Right cardiac atrium (tissue), 5 donors: ENCODE measurements at regions of chr20 and their contacts with region 1.

Region 1: DNA sequence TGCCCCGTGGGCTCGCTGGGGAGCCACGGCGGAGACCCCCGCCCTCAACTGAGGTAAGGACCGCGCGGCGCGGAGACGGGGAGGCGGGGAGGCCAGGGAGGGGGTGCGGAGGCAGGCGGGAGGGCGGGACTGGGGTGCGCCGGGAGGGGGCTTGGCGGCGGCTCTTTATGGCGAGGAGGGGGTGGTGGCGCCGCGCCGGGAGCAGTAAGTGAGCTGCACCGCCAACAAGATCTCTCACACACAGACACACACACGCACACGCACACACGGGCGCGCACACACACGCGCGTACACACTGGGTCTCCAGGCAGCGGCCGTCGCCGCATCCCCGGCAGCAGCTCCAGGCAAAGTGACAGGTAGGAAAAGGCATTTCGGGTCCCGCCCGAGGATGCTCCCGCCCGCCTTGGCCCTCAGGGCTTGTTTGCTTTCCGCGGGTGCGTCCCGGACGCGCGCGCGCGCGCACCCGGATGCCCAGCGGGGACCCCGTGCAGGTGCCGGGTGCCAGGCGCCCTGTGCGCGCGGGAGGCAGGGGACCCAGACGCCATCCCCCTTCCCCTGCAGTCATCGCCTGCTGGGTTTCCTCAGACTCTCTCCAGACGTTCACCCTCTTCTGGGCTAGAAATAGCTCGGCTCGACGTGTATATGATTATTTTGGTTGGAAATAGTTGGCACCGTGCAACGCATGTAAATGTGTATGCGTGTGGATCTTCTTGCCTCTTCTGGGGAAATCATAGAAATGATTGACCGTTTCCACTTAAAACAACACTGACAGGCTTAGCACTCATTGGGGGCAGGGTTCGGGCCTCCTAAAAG is at the start of gene PLCB4:
- DNase-seq: peak; percentile 46 to 80 (median 80)
- ATAC-seq: peak; percentile 33 to 52
- H3K4me3 ChIP-seq: peak within 1 kb of the TSS; percentile 92
- H3K27ac ChIP-seq: peak within 1 kb of the TSS; percentile 76
- H3K4me1 ChIP-seq: peaks cover 5% of the 10 kb centered on the region
- H3K27me3 ChIP-seq: no peaks in the 10 kb centered on the region
- total RNA-seq, gene PLCB4: 22.8 to 42.2 (median 28.3) TPM

Region 2: GRCh38 chr20:8853805-8854338 is 215.2 kb before region 1 on chr20:
- intact Hi-C with region 1: loop called in 2 of 4 experiments (anchors 10 kb)
- DNase-seq: no peak
- ATAC-seq: peak; percentile 88 to 89
- H3K4me3 ChIP-seq: no peak overlapping the region
- H3K27ac ChIP-seq: peak overlapping the region; percentile 48
- H3K4me1 ChIP-seq: no peaks in the 10 kb centered on the region
- H3K27me3 ChIP-seq: no peaks in the 10 kb centered on the region